A549 (cell line): ENCODE measurements at regions of chr17 and their contacts with region 1.

Region 1: GRCh38 chr17:385926-386876 is 33.6 kb upstream of the RPH3AL start:
- DNase-seq: peak; percentile 76 to 96
- ATAC-seq: peak; percentile 85
- H3K4me3 ChIP-seq: peak overlapping the region; percentile 69
- H3K27ac ChIP-seq: peak overlapping the region; percentile 96 to 99
- H3K4me1 ChIP-seq: peaks cover 41% of the 10 kb centered on the region
- CTCF ChIP-seq: peak; percentile 93
- EP300 ChIP-seq: no peak
- POLR2A ChIP-seq: no peak
- RAD21 ChIP-seq: peak; percentile 82 to 99

Region 2: GRCh38 chr17:143782-144281 is 242.4 kb before region 1 on chr17:
- CTCF ChIA-PET with region 1: interaction called, 11 read pairs
- POLR2A ChIA-PET with region 1: no interaction called
- DNase-seq: peak; percentile 85 to 92
- ATAC-seq: peak; percentile 79 to 89
- H3K4me3 ChIP-seq: no peak overlapping the region
- H3K27ac ChIP-seq: no peak overlapping the region
- H3K4me1 ChIP-seq: 0 out of 3 replicates have a peak, but pooled peaks cover 4% of the 10 kb centered on the region
- CTCF ChIP-seq: peak; percentile 95
- EP300 ChIP-seq: no peak
- POLR2A ChIP-seq: no peak
- RAD21 ChIP-seq: peak; percentile 80 to 98

Region 3: DNA sequence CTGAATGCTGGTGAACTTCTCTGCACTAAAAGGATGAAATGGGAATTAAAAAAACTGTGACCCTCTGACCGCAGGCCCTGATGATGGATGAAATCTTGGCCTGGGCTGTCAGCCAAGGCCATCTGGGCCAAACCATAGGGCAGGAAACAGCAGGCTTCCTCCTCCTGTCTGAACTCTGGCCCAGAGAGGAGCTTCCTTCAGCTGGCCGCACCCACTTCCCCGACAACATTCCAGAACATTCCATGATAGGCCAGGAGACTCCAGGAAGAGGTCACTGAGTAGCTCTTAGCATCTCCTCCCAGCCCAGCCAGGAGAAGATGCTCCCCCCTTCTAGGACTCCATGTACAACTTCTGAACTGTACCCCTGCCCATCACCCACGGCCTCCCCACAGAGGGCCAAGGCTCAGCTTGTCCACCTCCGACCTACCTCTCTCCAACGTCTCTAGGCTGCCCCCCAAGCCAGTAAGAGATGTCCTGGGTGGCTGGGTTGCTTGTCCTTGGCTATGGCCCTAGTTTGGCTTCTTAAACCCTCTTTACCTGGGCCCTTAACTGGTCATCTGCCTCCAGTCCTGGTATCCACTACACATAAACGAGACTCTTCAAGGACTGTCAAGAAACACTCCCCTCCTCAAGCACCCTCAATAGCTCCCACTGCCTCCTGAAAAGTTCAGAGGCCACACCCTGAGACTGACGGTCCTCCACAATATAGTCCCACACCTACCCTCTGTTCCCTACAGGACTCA is 35.3 kb before region 1 on chr17:
- CTCF ChIA-PET with region 1: interaction called, 25 read pairs
- POLR2A ChIA-PET with region 1: interaction called, 6 read pairs
- DNase-seq: peak; percentile 86 to 96
- ATAC-seq: peak; percentile 49 to 68; a peak in 5 of 6 replicates
- H3K4me3 ChIP-seq: peak overlapping the region; percentile 48
- H3K27ac ChIP-seq: peak overlapping the region; percentile 97 to 98
- H3K4me1 ChIP-seq: peaks cover 72% of the 10 kb centered on the region
- CTCF ChIP-seq: no peak
- EP300 ChIP-seq: no peak
- POLR2A ChIP-seq: 0 out of 2 replicates have a peak, but pooled peaks have one; percentile 25
- RAD21 ChIP-seq: no peak; a peak in 1 of 5 replicates

Region 4: DNA sequence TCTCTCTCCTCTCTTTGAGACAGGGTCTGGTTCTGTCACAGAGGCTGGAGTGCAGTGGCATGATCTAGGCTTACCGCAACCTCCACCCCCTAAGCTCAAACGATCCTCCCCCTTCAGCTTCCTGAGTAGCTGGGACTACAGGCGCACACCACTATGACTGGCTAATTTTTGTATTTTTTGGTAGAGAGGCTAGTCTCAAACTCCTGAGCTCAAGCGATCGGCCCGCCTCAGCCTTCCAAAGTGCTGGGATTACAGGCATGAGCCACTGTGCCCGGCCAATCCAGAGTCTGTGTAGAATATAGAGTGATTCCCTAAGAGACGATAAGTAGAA is 32.2 kb after region 1 on chr17:
- CTCF ChIA-PET with region 1: no interaction called
- POLR2A ChIA-PET with region 1: no interaction called
- DNase-seq: no peak
- ATAC-seq: no peak
- H3K4me3 ChIP-seq: no peak overlapping the region
- H3K27ac ChIP-seq: no peak overlapping the region
- H3K4me1 ChIP-seq: no peaks in the 10 kb centered on the region
- CTCF ChIP-seq: no peak
- EP300 ChIP-seq: no peak
- POLR2A ChIP-seq: no peak
- RAD21 ChIP-seq: no peak

Region 5: GRCh38 chr17:732067-732901 is 346.1 kb after region 1 on chr17 and contains the start of gene TLCD3A:
- CTCF ChIA-PET with region 1: no interaction called
- POLR2A ChIA-PET with region 1: no interaction called
- DNase-seq: peak; percentile 61 to 82
- ATAC-seq: peak; percentile 72 to 80
- H3K4me3 ChIP-seq: peak within 1 kb of the TSS; percentile 80
- H3K27ac ChIP-seq: peak within 1 kb of the TSS; percentile 89 to 96
- H3K4me1 ChIP-seq: peaks cover 14% of the 10 kb centered on the region
- CTCF ChIP-seq: no peak; the same call in 2 of the 3 replicates
- EP300 ChIP-seq: no peak
- POLR2A ChIP-seq: peak; percentile 56
- RAD21 ChIP-seq: no peak
- polyA plus RNA-seq, gene TLCD3A: 29.5 and 35.1 TPM in 2 replicates

Region 6: GRCh38 chr17:2151358-2152033 is 1765.3 kb after region 1 on chr17:
- CTCF ChIA-PET with region 1: no interaction called
- POLR2A ChIA-PET with region 1: no interaction called
- DNase-seq: no peak
- ATAC-seq: no peak
- H3K4me3 ChIP-seq: no peak overlapping the region
- H3K27ac ChIP-seq: no peak overlapping the region
- H3K4me1 ChIP-seq: no peaks in the 10 kb centered on the region
- CTCF ChIP-seq: no peak
- EP300 ChIP-seq: no peak
- POLR2A ChIP-seq: no peak
- RAD21 ChIP-seq: no peak